Right cardiac atrium (tissue), 5 donors: ENCODE measurements at regions of chr1 and their contacts with region 1.

Region 1: GRCh38 chr1:63691701-63692425 is 82.0 kb upstream of the ROR1 start:
- DNase-seq: no peak
- ATAC-seq: peak; percentile 87 to 90
- H3K4me3 ChIP-seq: no peak overlapping the region
- H3K27ac ChIP-seq: no peak overlapping the region
- H3K4me1 ChIP-seq: no peaks in the 10 kb centered on the region
- H3K27me3 ChIP-seq: no peaks in the 10 kb centered on the region

Region 2: GRCh38 chr1:63731117-63732043 is 39.5 kb after region 1 on chr1:
- intact Hi-C with region 1: no loop called
- DNase-seq: peak in 1 of 3 donors; percentile 56
- ATAC-seq: peak; percentile 40 to 61
- H3K4me3 ChIP-seq: no peak overlapping the region
- H3K27ac ChIP-seq: no peak overlapping the region
- H3K4me1 ChIP-seq: no peaks in the 10 kb centered on the region
- H3K27me3 ChIP-seq: no peaks in the 10 kb centered on the region

Region 3: GRCh38 chr1:63773815-63774616 is 82.2 kb after region 1 on chr1 and contains the start of gene ROR1:
- intact Hi-C with region 1: loop called in 1 of 4 experiments (anchors 10 kb)
- DNase-seq: peak; percentile 88 to 95 (median 94)
- ATAC-seq: peak; percentile 98
- H3K4me3 ChIP-seq: peak within 1 kb of the TSS; percentile 80
- H3K27ac ChIP-seq: peak within 1 kb of the TSS; percentile 74
- H3K4me1 ChIP-seq: no peaks in the 10 kb centered on the region
- H3K27me3 ChIP-seq: no peaks in the 10 kb centered on the region
- total RNA-seq, gene ROR1: 10.6 to 32.5 (median 13.5) TPM

Region 4: GRCh38 chr1:64136752-64137411 is 445.0 kb after region 1 on chr1:
- intact Hi-C with region 1: loop called (anchors 5 to 10 kb)
- DNase-seq: peak; percentile 64 to 90 (median 81)
- ATAC-seq: peak; percentile 85 to 87
- H3K4me3 ChIP-seq: no peak overlapping the region
- H3K27ac ChIP-seq: no peak overlapping the region
- H3K4me1 ChIP-seq: no peaks in the 10 kb centered on the region
- H3K27me3 ChIP-seq: no peaks in the 10 kb centered on the region

Region 5: GRCh38 chr1:64147759-64148158 is 455.9 kb after region 1 on chr1:
- intact Hi-C with region 1: loop called in 1 of 4 experiments (anchors 10 kb)
- DNase-seq: no peak
- ATAC-seq: peak in 1 of 2 donors; percentile 26
- H3K4me3 ChIP-seq: no peak overlapping the region
- H3K27ac ChIP-seq: no peak overlapping the region
- H3K4me1 ChIP-seq: no peaks in the 10 kb centered on the region
- H3K27me3 ChIP-seq: no peaks in the 10 kb centered on the region

Region 6: GRCh38 chr1:64242895-64243756 is 551.3 kb after region 1 on chr1:
- intact Hi-C with region 1: loop called in 1 of 4 experiments (anchors 5 kb)
- DNase-seq: no peak
- ATAC-seq: no peak
- H3K4me3 ChIP-seq: no peak overlapping the region
- H3K27ac ChIP-seq: no peak overlapping the region
- H3K4me1 ChIP-seq: no peaks in the 10 kb centered on the region
- H3K27me3 ChIP-seq: no peaks in the 10 kb centered on the region